ENCODE measurements at regions of chr1 and their contacts with region 1.

Region 1: GRCh38 chr1:183655562-183656075 is 2.5 kb upstream of the APOBEC4 start:
- DNase-seq: peak; percentile 82
- H3K4me3 ChIP-seq: no peak overlapping the region; a peak in 1 of 4 replicates
- H3K27ac ChIP-seq: peak overlapping the region; percentile 19 to 43; a peak in 3 of 4 replicates
- H3K4me1 ChIP-seq: peaks cover 2 to 9% of the 10 kb centered on the region in 2 experiments; a peak in 3 of 4 replicates
- H3K27me3 ChIP-seq: no peaks in the 10 kb centered on the region
- CTCF ChIP-seq: peak; percentile 93
- EP300 ChIP-seq: no peak
- RAD21 ChIP-seq: peak; percentile 98

Region 2: DNA sequence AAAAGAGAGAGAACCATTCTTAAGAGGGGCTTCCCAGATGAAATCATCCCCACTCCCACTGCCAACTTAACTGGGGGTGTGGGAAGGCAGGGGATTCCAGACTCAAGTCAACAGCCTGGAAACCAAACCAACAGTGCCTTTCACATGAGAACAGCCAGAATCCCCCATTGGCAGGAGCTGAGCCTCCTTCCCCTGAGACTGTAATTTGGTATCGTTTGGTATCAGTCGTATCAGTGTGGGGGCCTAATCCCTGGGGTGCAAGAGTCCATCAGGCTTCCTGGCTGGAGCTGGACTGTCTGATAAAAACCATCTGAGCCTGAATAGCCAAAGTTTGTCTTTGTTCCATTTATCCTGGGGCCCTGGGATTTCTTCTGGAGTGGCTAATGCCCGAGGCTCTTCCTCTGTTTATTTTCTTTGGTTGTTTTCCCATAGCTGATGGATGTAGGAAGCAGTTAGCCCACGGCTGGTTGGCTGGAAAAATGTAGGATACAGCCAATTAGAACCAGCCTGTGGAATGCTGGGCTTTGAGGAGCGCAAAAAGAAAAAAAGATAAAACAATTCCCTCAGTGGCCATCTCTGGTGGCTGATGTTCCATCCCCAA is 385.0 kb before region 1 on chr1:
- CTCF ChIA-PET with region 1: no interaction called
- POLR2A ChIA-PET with region 1: no interaction called
- DNase-seq: peak; percentile 53
- H3K4me3 ChIP-seq: no peak overlapping the region
- H3K27ac ChIP-seq: peak overlapping the region; percentile 34 to 85; a peak in 3 of 4 replicates
- H3K4me1 ChIP-seq: peaks cover 13 to 22% of the 10 kb centered on the region in 2 experiments
- H3K27me3 ChIP-seq: no peaks in the 10 kb centered on the region
- CTCF ChIP-seq: no peak
- EP300 ChIP-seq: no peak
- RAD21 ChIP-seq: no peak

Region 3: DNA sequence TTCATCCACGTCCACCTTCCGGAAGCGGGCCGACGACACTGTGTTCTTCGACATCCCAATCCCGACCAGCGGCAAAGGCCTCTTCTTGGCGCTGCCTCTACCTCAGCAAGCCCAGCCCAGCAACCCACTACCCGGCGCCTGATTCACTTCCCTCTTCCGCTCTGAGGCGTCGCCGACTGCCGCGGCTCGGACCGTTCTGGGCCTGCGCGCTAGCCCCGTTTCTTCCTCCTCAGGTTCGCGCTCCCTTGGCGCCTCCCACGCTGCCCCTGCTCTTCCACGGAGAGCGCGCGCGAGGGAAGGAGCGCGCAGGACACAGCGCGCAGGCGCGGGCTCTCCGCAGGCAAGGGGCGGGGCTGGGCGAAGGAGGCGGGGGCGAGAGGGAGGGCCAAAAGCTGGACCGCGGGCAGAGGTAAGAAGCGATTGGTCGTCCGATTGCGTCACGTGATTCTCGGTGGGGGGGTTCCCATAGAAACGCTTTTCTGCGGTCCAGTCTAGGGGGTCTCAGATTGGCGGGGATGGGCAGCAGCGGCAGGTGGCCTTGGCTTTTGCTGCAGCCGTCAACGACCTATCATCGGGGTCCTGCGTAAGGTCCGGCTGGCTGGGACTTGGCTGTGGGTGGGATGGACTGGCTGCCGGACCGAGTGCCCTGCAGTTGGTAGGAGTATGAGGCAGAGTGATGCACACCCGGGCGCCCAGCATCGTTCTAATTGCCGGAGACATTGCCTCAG is 19.8 kb before region 1 on chr1 and contains the start of gene ARPC5:
- CTCF ChIA-PET with region 1: interaction called, 13 read pairs
- POLR2A ChIA-PET with region 1: no interaction called
- DNase-seq: peak; percentile 93
- H3K4me3 ChIP-seq: peak within 1 kb of the TSS; percentile 85 to 92
- H3K27ac ChIP-seq: peak within 1 kb of the TSS; percentile 82 to 94
- H3K4me1 ChIP-seq: peaks cover 10 to 32% of the 10 kb centered on the region in 2 experiments; a peak in 3 of 4 replicates
- H3K27me3 ChIP-seq: no peaks in the 10 kb centered on the region
- CTCF ChIP-seq: no peak
- EP300 ChIP-seq: no peak
- RAD21 ChIP-seq: no peak
- polyA plus RNA-seq, gene ARPC5: 66.8 and 97.6 TPM in 2 replicates

Region 4: DNA sequence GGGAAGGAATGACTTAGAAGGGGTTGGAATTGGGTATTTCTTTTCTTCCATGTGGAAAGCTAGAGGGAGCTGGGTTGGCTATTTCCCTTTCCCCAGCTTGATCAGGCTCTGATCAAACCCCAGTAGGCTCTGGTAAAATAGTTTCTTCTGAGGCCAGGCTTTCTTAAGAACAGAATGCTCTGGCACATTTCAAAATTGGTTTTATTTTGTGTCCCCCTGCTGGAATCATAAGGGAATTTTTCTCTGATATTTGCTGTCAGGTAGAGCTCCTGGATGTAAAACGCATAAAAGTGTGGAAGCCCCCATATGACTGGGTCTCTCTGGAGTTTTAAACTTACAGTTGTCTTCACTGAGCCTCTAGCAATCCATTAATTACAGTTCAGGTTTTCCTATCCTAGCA is 14.6 kb after region 1 on chr1:
- CTCF ChIA-PET with region 1: interaction called, 21 read pairs
- POLR2A ChIA-PET with region 1: no interaction called
- DNase-seq: no peak
- H3K4me3 ChIP-seq: no peak overlapping the region
- H3K27ac ChIP-seq: no peak overlapping the region
- H3K4me1 ChIP-seq: no peaks in the 10 kb centered on the region; a peak in 1 of 4 replicates
- H3K27me3 ChIP-seq: no peaks in the 10 kb centered on the region
- CTCF ChIP-seq: peak; percentile 11; the same call in 1 of the 2 replicates
- EP300 ChIP-seq: no peak
- RAD21 ChIP-seq: no peak

Region 5: DNA sequence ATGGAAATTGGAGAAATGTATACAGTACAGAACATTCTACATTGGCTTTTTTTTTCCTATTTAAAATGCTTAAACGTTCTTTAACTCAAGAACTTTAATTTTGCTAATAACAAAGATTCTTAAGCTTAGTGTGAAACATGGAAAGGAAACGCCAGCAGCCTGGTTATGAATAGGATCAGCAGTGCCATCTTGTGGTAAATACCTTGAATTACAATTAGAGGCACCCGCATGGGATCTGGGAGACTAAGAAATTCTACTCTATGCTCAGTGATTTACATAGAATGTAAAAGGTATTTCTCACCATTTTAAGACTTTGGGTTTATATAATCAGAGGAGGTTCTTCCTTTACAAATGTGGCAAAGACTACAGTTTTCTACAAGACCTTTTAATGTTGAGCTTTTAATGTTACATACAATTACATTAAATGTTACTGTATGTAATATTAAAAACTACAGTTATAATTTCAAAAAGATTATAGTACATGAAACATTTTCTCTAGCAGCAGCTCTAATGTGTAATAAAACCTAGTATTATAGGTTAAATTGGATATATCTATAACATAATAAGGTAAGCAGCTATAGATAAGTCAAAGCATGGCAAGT is 29.6 kb after region 1 on chr1:
- CTCF ChIA-PET with region 1: interaction called, 39 read pairs
- POLR2A ChIA-PET with region 1: no interaction called
- DNase-seq: peak; percentile 56
- H3K4me3 ChIP-seq: no peak overlapping the region; a peak in 1 of 4 replicates
- H3K27ac ChIP-seq: no peak overlapping the region
- H3K4me1 ChIP-seq: no peaks in the 10 kb centered on the region
- H3K27me3 ChIP-seq: no peaks in the 10 kb centered on the region
- CTCF ChIP-seq: peak; percentile 70
- EP300 ChIP-seq: no peak
- RAD21 ChIP-seq: peak; percentile 77

Region 6: DNA sequence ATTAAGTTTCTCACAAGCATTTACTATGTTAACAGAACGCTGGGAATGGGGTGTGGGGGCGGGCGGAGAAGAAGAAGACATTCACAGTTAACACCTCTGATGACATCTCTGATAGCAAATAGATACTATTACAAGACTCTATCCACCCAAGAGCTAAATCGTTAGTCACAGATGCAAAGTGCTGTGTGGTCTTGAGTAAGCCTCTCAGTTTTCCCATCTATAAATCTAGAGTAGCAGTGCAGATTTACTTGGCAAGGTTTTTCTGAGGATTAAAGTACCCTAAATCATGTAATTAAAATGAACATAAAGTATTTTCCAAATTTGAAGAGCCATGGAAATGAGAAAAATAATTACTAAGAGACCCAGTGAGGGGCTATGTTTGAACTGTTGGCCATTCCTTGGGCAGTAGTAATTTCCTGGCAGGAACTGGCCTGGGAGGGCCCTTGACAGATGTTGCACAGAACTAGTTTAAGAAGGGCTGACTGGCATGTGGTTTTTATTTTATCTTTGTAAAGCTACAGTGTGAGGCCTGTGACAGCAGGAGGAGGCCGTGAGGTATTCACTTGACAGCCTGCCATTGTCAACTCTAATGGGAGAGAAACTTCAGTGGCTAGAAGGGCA is 56.2 kb after region 1 on chr1:
- CTCF ChIA-PET with region 1: interaction called, 13 read pairs
- POLR2A ChIA-PET with region 1: no interaction called
- DNase-seq: peak; percentile 10
- H3K4me3 ChIP-seq: no peak overlapping the region
- H3K27ac ChIP-seq: peak overlapping the region; percentile 53 to 86
- H3K4me1 ChIP-seq: peaks cover 19 to 22% of the 10 kb centered on the region in 2 experiments
- H3K27me3 ChIP-seq: no peaks in the 10 kb centered on the region
- CTCF ChIP-seq: peak; percentile 19; the same call in 1 of the 2 replicates
- EP300 ChIP-seq: peak in 1 of 2 experiments; percentile 48; a peak in 1 of 4 replicates
- RAD21 ChIP-seq: no peak

Region 7: GRCh38 chr1:183761871-183762270 is 106.3 kb after region 1 on chr1:
- CTCF ChIA-PET with region 1: no interaction called
- POLR2A ChIA-PET with region 1: no interaction called
- DNase-seq: no peak
- H3K4me3 ChIP-seq: no peak overlapping the region
- H3K27ac ChIP-seq: no peak overlapping the region
- H3K4me1 ChIP-seq: peaks cover 0 to 7% of the 10 kb centered on the region in 2 experiments; a peak in 2 of 4 replicates
- H3K27me3 ChIP-seq: no peaks in the 10 kb centered on the region
- CTCF ChIP-seq: no peak
- EP300 ChIP-seq: no peak
- RAD21 ChIP-seq: no peak

Region 8: DNA sequence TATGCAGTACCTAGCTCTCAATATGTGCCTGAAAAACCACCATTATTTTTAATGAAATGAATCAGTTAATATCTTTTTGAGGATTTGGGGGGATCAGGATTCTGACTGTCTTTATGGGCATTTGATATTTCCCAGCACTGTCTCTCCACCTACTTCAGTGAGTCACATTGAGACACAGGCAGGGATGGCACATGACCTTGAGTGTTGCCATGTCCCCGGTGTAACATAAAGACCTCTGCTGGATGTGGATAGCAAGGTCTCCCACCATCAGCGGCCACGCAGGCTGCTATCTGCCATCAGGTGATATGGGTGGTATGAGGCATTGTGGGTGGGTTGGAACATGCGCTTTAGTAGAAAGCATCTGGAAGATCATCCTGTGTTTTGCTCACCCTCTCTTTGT is 252.5 kb after region 1 on chr1:
- CTCF ChIA-PET with region 1: interaction called, 219 read pairs
- POLR2A ChIA-PET with region 1: no interaction called
- DNase-seq: no peak
- H3K4me3 ChIP-seq: no peak overlapping the region
- H3K27ac ChIP-seq: no peak overlapping the region
- H3K4me1 ChIP-seq: no peaks in the 10 kb centered on the region
- H3K27me3 ChIP-seq: no peaks in the 10 kb centered on the region
- CTCF ChIP-seq: no peak
- EP300 ChIP-seq: no peak
- RAD21 ChIP-seq: no peak

Region 9: GRCh38 chr1:183922197-183922596 is 266.6 kb after region 1 on chr1:
- CTCF ChIA-PET with region 1: interaction called, 219 read pairs
- POLR2A ChIA-PET with region 1: no interaction called
- DNase-seq: no peak
- H3K4me3 ChIP-seq: no peak overlapping the region
- H3K27ac ChIP-seq: no peak overlapping the region
- H3K4me1 ChIP-seq: no peaks in the 10 kb centered on the region
- H3K27me3 ChIP-seq: no peaks in the 10 kb centered on the region
- CTCF ChIP-seq: peak; percentile 33; the same call in 1 of the 2 replicates
- EP300 ChIP-seq: no peak
- RAD21 ChIP-seq: no peak

Measured in SK-N-SH (cell line).